HEK293T (cell line): ENCODE measurements at regions of chr17 and their contacts with region 1.

Region 1: DNA sequence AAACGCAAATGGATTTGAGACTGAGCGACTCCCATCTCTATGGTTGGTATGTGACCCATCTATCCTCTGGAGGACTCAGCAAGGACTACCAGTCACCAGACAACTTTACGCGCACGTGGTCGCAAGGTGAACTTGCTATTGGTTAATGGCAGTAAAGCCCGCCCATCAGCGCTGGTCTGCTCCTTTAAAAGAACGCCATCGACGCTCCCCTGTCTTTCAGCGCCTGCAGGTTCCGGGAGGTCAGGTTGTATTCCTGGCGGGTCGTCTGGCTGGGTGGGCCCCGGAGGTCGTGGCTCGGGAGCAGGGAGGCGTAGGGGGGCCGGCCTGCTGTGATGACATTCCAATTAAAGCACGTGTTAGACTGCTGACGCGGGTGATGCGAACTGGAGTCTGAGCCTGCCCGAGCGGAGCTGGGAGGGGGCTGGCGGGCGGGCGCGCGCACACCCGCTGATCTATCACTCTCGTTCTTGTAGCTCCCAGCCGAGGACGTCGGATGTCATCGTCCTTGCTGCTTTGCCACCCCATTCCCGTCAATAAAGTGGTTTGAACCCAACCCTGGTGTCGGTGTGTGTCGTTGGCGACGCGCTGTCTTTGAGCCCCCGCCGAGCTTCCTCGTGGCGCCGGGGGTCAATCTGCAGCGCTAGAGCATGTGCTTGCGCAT is 15.9 kb upstream of the ERN1 start:
- DNase-seq: peak; percentile 95

Region 2: GRCh38 chr17:63854709-63855108 is 291.2 kb before region 1 on chr17:
- CTCF ChIA-PET with region 1: no interaction called
- POLR2A ChIA-PET with region 1: no interaction called
- DNase-seq: no peak

Region 3: DNA sequence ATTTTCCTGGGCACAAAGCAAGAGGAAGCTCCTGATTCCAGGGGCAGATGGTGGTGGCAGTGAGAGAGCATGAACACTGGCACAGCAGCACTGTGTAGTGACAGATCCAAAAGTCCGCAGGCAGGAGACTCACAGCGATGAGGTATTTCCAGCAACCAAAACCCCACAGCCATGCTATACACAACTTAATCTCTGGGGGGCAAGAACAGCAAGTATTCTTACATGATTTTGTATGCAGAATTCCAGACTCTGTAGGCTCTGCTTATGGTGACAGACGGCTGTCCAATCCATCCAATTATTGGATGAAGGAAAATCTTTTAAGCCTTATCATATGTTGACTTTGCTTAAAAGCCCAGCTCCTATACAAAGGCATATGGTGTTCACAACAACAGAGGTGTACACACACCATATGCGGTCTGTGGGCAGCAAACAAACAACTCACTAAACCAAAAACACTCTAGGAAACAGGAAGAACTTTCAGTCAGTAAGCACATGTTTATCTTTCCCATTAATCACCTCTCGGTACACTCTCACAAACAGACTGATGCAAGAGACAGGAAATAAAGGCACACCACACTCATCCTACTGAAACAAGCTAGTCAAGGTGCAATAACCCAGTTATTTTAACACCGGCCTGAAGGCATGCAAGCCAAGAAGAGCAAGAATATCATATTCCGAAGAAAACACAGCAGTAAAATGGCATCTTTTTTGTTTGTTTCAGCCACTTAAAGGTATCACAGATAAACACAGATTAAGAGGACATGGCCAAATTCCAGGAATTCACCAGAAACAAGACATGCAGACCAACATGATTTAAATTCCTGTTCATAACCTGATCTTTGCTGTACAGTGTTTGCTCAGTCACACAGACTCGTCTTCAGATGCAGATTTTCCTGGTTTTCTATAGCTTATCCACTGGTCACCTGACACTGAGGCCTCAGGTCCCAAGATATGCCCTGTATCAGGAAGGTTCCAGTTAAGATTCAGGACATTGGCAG is 63.8 kb before region 1 on chr17:
- CTCF ChIA-PET with region 1: no interaction called
- POLR2A ChIA-PET with region 1: interaction called, 11 read pairs
- DNase-seq: peak; percentile 46

Region 4: DNA sequence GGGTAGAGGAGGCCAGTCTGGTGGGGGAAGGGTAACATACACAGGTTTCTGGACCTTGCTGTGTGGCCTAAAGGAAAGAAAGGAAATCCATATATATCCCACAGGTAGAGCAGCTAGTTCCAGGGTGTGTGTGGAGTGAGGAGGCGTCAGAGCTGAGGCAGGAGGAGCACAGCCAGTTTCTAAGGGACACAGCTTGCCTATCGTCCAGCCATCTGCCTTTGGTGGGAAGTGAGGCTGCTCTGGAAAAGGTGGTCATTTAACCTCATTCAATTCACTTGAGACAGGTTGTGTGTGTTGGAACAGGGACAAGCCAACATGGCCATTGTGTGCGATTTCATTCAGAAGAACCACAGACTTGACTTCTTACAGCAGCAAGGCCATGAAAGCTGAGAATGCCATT is 21.0 kb after region 1 on chr17:
- CTCF ChIA-PET with region 1: no interaction called
- POLR2A ChIA-PET with region 1: interaction called, 51 read pairs
- DNase-seq: no peak

Region 5: DNA sequence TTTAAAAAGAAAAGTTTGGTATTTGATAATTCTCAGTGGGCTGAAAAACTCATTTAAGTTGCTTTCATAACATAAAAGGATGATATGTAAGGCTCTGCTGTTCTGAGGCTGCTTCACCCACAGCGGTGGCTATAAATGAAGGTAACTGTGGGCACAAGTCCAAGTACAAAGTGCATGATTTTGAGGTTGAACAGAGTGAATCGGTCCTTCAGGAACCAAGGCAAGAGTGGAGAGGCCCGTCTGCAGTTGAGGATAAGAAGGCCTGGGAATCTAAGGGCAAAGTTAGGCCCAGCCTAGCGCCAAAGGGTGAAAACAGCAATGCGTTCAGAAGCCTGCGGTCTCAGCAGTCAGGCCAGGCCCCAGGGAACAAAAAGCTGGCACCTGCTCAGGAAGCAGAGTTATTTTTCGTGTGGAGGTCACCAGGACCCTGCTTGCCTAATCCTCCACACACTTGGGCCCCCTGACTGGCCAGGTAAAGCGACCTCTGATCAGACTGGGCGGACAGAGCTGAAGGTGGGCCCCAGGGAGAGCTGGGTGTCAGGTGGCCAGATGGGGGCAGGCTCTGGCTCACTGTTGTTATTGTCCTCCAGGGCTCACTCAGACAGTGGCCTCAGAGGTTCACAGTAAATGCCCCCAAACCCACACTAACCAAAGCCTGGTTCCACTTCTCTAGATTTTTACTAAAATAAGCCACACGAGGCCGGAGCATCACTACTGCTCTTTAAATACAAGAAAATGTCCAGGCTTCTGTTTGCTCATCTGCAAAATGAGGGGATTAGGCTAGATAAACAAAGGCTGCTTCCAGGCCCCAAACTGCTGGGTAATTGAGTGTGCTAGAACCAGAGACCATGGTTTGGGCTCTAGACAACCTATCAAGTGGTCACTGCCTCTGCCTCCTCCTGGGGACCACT is 70.7 kb after region 1 on chr17:
- CTCF ChIA-PET with region 1: no interaction called
- POLR2A ChIA-PET with region 1: interaction called, 10 read pairs
- DNase-seq: no peak

Region 6: DNA sequence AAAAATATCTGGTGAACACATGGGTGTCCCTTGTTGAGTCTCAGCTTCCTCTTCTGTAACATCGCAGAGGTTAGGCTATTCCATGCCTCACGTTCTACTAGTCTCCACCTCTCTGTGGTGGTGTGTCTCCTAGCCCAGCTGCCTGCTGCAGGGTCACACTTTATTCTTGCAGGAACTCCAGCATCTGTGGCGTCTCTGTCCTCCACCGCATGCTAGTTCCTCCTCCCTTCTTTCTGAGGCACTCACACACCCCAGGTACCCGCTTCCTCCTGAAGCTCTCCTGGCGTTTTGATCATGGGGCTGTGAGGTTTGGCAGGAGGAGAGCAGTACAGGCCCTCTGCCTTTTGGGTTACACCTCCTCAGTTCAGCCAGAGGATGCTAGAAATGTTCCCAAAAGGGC is 127.1 kb after region 1 on chr17:
- CTCF ChIA-PET with region 1: no interaction called
- POLR2A ChIA-PET with region 1: interaction called, 17 read pairs
- DNase-seq: no peak

Region 7: DNA sequence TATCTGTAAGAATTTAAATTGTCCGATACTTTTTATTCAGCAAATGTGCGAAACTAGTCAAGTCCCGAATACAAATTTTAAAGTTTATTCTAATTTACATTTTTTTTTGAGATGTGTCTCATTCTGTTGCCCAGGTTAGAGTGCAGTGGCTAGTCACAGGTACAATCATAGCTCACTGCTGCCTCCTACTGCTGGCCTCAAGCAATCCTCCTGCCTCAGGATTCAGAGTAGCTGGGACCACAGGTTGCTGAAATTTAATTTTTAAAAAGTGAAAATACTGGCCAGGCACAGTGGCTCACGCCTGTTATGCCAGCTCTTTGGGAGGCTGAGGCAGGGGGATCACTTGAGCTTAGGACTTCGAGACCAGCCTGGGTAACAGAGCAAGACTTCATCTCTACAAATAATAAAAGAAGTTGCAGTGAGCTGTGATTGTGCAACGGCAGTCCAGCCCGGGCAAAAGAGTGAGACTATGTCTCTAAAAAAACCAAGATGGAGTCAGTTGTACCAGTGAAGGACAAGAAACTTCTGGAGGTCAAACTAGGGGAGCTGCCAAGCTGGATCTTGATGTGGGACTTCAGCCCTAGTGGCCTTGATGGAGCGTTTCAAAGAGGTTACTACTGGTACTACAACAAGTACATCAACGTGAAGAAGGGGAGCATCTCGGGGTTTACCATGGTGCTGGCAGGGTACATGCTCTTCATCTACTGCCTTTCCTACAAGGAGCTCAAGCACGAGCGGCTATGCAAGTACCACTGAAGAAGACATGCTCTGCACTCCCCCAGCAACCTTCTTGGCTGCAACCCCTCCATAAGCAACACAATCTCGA is 345.4 kb after region 1 on chr17:
- CTCF ChIA-PET with region 1: no interaction called
- POLR2A ChIA-PET with region 1: no interaction called
- DNase-seq: no peak